Left colon (tissue), 2 donors: ENCODE measurements at regions of chrX and their contacts with region 1.

Region 1: GRCh38 chrX:22365460-22365859 is 92.7 kb downstream of the CBLL2 start:
- DNase-seq: no peak
- ATAC-seq: no peak

Region 2: GRCh38 chrX:22424122-22424915 is 58.9 kb after region 1 on chrX:
- intact Hi-C with region 1: loop called in 1 of 2 experiments (anchors 10 kb)
- DNase-seq: no peak
- ATAC-seq: no peak

Region 3: DNA sequence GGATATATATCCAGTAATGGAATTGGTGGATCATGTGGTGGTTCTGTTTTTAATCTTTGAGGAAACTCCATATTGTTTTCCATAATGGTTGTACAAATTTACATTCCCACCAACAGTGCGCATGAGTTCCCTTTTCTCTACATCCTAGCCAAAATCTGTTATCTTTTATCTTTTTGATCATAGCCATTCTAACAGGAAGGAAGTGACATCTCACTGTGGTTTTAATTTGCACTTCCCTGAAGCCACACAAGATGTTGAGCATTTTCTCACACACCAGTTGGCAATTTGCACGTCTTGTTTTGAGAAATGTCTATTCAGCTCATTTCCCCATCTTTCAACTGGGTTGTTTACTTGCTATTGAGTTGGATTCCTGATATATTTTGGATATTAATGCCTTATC is 102.1 kb after region 1 on chrX:
- intact Hi-C with region 1: no loop called
- DNase-seq: no peak
- ATAC-seq: no peak